Heart left ventricle (tissue), 16 donors: ENCODE measurements at regions of chr1 and their contacts with region 1.

Region 1: GRCh38 chr1:207499573-207499972 is 3.6 kb downstream of the CR1 start:
- DNase-seq: peak in 4 of 5 donors; percentile 32 to 77 (median 40)
- ATAC-seq: peak; percentile 51 to 74 (median 67)
- H3K4me3 ChIP-seq: no peak overlapping the region
- H3K27ac ChIP-seq: no peak overlapping the region
- H3K4me1 ChIP-seq: peaks cover 0 to 11% (median 0%) of the 10 kb centered on the region in 12 donors
- H3K27me3 ChIP-seq: peaks cover 14 to 94% (median 31%) of the 10 kb centered on the region in 9 donors
- CTCF ChIP-seq: peak; percentile 40 to 73 (median 60)
- POLR2A ChIP-seq: no peak

Region 2: DNA sequence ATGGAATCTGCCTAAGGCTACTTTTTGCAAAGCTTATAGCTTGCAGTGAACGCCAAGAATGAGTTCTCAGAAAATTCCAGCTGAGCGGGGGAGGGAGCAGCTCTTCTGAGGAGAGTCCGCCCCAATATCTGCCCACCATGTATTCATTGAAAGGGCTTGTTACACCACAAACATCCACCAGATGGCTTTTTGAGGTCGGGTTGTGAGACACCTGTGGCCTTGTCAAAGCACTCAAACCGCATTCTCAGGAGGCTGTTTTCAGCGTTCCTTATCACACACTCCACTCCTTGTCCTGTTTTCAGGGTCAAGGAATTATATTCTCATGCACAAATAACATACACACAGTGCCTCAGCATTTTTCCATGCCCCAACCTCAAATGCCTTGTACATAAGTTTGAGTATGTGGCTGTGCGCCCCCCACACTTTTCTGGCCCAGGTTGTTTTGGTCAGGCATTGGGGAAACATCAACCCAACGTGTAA is 414.8 kb before region 1 on chr1:
- intact Hi-C with region 1: loop called in 8 of 10 experiments (anchors 2 to 5 kb)
- DNase-seq: peak in 3 of 5 donors; percentile 37 to 42 (median 38)
- ATAC-seq: peak in 3 of 4 donors; percentile 69 to 76 (median 72)
- H3K4me3 ChIP-seq: no peak overlapping the region
- H3K27ac ChIP-seq: no peak overlapping the region
- H3K4me1 ChIP-seq: peaks cover 0 to 13% (median 0%) of the 10 kb centered on the region in 12 donors
- H3K27me3 ChIP-seq: no peaks in the 10 kb centered on the region
- CTCF ChIP-seq: peak; percentile 41 to 72 (median 62)
- POLR2A ChIP-seq: no peak

Region 3: DNA sequence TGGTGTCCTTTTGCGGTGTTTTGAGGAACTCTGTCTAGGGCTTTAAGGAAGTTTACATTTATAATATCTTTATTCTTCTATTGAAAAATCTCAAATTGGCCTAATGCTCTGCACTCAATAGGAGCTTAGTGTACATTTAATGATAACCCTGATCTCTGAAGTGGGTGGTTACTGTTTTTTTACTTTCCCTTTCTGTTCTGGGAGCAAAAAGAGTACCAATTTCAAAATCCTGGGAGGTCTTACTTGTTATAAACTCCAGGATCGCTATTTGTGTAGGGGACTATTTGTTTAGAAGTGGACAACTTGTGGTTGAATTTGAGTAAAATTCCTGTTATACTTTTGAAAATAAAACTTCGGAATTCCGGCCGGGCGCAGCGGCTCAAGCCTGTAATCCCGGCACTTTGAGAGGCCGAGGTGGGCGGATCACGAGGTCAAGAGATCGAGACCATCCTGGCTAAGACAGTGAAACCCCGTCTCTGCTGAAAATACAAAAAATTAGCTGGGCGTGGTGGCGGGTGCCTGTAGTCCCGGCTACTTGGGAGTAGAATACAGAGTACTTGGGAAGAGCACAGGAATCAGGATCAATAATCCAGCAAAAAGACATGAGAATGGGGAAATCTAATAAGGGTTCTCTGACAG is 409.8 kb before region 1 on chr1:
- intact Hi-C with region 1: loop called in 9 of 10 experiments (anchors 2 to 5 kb)
- DNase-seq: no peak
- ATAC-seq: no peak
- H3K4me3 ChIP-seq: no peak overlapping the region
- H3K27ac ChIP-seq: no peak overlapping the region
- H3K4me1 ChIP-seq: peaks cover 0 to 9% (median 0%) of the 10 kb centered on the region in 12 donors
- H3K27me3 ChIP-seq: no peaks in the 10 kb centered on the region
- CTCF ChIP-seq: no peak
- POLR2A ChIP-seq: no peak

Region 4: DNA sequence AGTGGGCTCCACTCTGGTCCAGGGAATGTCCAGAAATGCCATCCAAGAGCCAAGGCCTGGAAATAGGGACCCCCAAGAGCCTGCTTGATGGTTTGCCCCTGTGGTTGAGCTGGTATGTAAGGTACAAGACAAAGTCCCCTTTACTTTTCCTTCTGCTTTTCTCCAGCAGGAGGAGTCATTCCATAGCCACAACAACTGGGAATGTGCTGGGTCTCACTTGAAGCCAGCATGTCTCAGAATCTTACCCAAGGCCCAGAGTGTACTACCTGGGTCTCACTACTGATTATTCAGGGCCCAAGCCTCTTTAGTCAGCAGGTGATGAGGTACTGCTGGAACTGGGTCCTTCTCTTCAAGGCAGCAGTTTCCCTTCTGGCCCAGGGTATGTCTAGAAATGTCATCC is 240.2 kb before region 1 on chr1:
- intact Hi-C with region 1: no loop called
- DNase-seq: no peak
- ATAC-seq: peak in 2 of 4 donors; percentile 36 to 56
- H3K4me3 ChIP-seq: no peak overlapping the region
- H3K27ac ChIP-seq: no peak overlapping the region
- H3K4me1 ChIP-seq: no peaks in the 10 kb centered on the region
- H3K27me3 ChIP-seq: no peaks in the 10 kb centered on the region
- CTCF ChIP-seq: peak in 7 of 12 donors; percentile 23 to 54 (median 39)
- POLR2A ChIP-seq: no peak